SK-N-SH (cell line): ENCODE measurements at regions of chr3 and their contacts with region 1.

Region 1: DNA sequence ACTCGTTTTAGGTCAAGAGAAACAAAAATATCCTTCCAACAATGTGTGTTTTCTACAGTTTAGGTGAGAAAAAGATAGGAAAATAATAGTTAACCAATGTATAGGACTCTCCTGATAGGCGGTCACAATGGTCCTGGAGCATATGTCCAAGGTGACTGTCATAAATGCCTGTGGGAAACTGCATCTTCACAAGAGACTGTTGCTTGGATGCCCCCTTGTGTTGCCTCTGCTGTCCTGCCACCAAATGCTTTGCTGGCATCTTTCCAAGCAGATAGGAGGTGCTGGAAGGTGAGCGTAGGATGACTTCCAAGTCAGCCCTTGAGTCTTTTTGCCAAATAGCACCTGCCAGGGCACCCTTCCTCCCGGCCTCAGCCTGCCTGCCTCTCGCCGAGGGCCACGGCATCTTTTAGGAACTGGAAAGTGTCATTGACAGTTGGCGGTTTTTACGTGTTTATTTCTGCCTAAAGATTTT is 24.1 kb upstream of the SACM1L start:
- DNase-seq: peak; percentile 56
- H3K4me3 ChIP-seq: 0 out of 4 replicates have a peak overlapping the region, but pooled peaks of 1 of the 2 experiments have one; percentile 4
- H3K27ac ChIP-seq: peak overlapping the region in 1 of 2 experiments; percentile 97; a peak in 1 of 4 replicates
- H3K4me1 ChIP-seq: peaks cover 13 to 33% of the 10 kb centered on the region in 2 experiments; a peak in 3 of 4 replicates
- H3K27me3 ChIP-seq: no peaks in the 10 kb centered on the region
- CTCF ChIP-seq: peak; percentile 62
- EP300 ChIP-seq: no peak
- RAD21 ChIP-seq: peak; percentile 53

Region 2: DNA sequence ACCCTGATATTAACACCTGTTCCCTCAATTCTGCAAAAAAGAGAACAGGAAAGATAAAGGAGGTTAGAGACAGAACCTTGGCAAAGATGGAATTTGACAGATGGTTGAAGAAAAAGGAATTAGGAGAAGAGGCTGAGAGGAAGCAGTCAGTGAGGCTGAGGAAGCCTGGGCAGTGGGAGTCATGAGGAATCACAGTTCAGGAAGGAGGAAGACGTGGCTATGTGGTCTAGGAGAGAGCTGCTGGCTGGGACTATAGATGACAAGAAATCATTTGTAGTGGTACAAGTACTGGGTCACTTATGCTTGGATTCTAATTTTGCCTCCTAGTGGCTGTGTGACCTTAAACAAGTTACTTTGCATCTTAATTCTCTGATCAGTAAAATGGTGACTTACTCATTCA is 227.8 kb before region 1 on chr3:
- CTCF ChIA-PET with region 1: no interaction called
- POLR2A ChIA-PET with region 1: no interaction called
- DNase-seq: no peak
- H3K4me3 ChIP-seq: no peak overlapping the region
- H3K27ac ChIP-seq: no peak overlapping the region
- H3K4me1 ChIP-seq: no peaks in the 10 kb centered on the region; a peak in 1 of 4 replicates
- H3K27me3 ChIP-seq: no peaks in the 10 kb centered on the region
- CTCF ChIP-seq: no peak
- EP300 ChIP-seq: no peak
- RAD21 ChIP-seq: no peak

Region 3: GRCh38 chr3:45486136-45486535 is 179.0 kb before region 1 on chr3:
- CTCF ChIA-PET with region 1: no interaction called
- POLR2A ChIA-PET with region 1: no interaction called
- DNase-seq: no peak
- H3K4me3 ChIP-seq: no peak overlapping the region
- H3K27ac ChIP-seq: no peak overlapping the region
- H3K4me1 ChIP-seq: no peaks in the 10 kb centered on the region
- H3K27me3 ChIP-seq: no peaks in the 10 kb centered on the region
- CTCF ChIP-seq: no peak
- EP300 ChIP-seq: no peak
- RAD21 ChIP-seq: no peak

Region 4: GRCh38 chr3:45507820-45508317 is 157.3 kb before region 1 on chr3:
- CTCF ChIA-PET with region 1: interaction called, 100 read pairs
- POLR2A ChIA-PET with region 1: no interaction called
- DNase-seq: peak; percentile 30
- H3K4me3 ChIP-seq: peak overlapping the region in 1 of 2 experiments; percentile 5; a peak in 1 of 4 replicates
- H3K27ac ChIP-seq: peak overlapping the region in 1 of 2 experiments; percentile 76; a peak in 2 of 4 replicates
- H3K4me1 ChIP-seq: peaks cover 2 to 30% of the 10 kb centered on the region in 2 experiments; a peak in 3 of 4 replicates
- H3K27me3 ChIP-seq: no peaks in the 10 kb centered on the region
- CTCF ChIP-seq: peak; percentile 48
- EP300 ChIP-seq: no peak
- RAD21 ChIP-seq: peak; percentile 43

Region 5: DNA sequence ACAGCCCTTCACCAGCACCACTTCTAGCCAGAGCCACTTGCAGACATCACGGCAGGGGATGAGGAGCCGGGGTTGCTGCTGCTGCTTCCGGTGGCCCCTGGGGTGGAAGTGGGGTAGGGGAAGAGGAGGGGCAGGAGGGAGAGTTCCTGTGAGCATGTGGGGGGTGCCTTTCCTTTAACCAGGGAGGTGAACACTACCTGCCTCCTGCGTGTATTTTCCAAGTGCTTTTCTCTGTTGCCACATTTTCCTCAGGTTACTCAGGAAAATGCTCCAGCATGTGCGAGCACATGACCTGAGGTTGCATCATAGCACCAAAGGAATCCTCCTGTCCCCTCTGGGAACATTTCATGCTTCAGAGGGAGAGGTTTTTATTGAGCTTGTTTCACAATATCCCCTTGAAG is 11.9 kb after region 1 on chr3:
- CTCF ChIA-PET with region 1: interaction called, 10 read pairs
- POLR2A ChIA-PET with region 1: no interaction called
- DNase-seq: no peak
- H3K4me3 ChIP-seq: no peak overlapping the region
- H3K27ac ChIP-seq: no peak overlapping the region
- H3K4me1 ChIP-seq: peaks cover 0 to 3% of the 10 kb centered on the region in 2 experiments; a peak in 1 of 4 replicates
- H3K27me3 ChIP-seq: no peaks in the 10 kb centered on the region
- CTCF ChIP-seq: no peak
- EP300 ChIP-seq: no peak
- RAD21 ChIP-seq: no peak

Region 6: DNA sequence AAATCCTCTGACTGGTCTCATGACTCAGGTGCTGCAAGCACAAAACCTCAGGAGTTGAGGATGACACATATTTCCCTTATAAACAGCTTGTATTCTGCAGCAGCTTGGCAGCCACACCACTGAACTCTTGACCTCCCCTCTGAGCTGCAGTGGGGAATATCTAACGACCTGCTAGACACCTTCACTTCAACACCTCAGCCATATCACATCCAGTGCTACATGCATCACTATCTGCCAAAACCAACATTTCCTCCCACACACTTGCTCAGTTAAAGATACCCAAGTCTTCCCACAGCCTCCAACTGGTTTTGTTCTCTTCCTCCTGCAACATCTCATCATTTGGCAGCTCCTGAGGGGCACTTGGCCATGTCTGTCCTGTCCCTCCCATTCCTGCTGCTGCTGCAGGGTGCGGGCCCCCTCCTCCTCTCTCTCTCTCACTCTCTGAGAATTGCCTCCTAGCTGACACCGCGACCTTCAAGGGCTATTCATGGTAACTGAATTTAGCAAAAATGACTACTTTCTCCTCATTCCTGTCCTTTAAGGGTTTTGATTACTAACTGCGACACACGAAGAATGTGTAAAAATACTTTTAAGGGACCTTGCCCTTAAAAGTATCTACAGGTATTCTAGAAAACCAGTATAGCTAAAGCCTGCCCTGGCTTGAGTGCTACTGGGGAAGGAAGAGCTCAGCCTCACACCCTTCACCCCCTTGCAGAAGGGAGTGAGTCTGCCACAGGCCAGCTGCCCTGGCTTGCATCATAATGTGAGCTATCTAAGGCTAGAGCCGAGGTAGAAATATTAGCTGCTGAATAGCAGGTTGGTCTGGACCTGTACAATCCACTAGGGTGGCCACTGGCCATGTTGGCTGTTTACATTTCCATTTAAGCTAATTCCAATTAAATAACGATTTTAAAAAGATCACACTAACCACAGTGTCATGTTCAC is 216.2 kb after region 1 on chr3:
- CTCF ChIA-PET with region 1: no interaction called
- POLR2A ChIA-PET with region 1: no interaction called
- DNase-seq: no peak
- H3K4me3 ChIP-seq: no peak overlapping the region
- H3K27ac ChIP-seq: no peak overlapping the region
- H3K4me1 ChIP-seq: no peaks in the 10 kb centered on the region; a peak in 1 of 4 replicates
- H3K27me3 ChIP-seq: no peaks in the 10 kb centered on the region
- CTCF ChIP-seq: no peak
- EP300 ChIP-seq: no peak
- RAD21 ChIP-seq: no peak